Activated naive CD4-positive, alpha-beta T cell treated with anti-CD3 and anti-CD28 coated beads, Interleukin-2, amount 10 ng/mL, durations not matched to agents 7 days and 5 days (primary cell): ENCODE measurements at regions of chr1 and their contacts with region 1.

Region 1: GRCh38 chr1:221741711-221742554 is at the start of gene DUSP10:
- DNase-seq: peak; percentile 100
- H3K4me3 Mint-ChIP-seq: peak within 1 kb of the TSS; percentile 70
- H3K27ac Mint-ChIP-seq: no peak within 1 kb of the TSS
- H3K4me1 Mint-ChIP-seq: peaks cover 17% of the 10 kb centered on the region
- H3K27me3 Mint-ChIP-seq: no peaks in the 10 kb centered on the region

Region 2: DNA sequence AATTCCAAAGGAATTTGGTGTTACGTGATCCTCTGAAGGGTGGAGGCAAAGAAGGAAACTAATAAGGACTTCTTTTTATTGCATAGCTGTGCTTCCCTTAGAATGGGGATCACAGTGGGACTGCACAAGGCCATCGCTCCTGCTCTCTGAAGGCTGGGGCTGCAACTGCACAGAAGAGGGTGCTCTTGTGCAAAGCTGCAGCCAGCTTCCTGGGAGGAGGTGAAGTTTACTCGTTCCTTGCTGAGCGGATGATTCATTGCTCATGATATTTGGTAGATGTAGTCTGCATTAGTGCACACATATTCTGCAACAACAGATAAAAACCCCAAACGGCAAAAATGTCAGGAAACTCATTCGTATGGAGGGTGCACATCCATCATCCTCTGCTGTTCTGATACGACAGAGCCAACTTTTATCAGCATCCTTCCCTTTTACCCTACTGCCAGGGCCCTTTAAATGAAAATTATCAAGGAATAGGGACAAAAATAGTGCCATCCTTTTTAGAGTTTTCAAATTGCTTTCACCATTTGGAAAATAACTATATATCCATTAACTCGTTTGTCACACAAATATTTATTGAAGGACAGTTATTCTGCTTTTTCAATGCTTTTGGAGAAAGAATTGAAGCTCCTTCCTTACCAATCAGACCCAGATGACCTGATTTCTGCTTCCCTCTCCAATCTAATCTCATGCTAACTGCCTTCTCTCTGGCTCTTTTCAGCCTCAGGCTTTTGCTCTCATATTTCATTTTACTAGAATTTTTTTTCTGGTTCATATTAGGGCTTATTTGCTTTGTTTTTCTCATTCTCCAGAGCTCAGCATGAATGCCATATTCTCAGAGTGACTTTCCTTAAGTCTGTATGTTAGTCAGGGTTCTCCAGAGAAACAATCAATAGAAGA is 263.6 kb before region 1 on chr1:
- CTCF ChIA-PET with region 1: interaction called, 21 read pairs
- DNase-seq: peak; percentile 64
- H3K4me3 Mint-ChIP-seq: no peak overlapping the region
- H3K27ac Mint-ChIP-seq: no peak overlapping the region
- H3K4me1 Mint-ChIP-seq: no peaks in the 10 kb centered on the region
- H3K27me3 Mint-ChIP-seq: peaks cover 8% of the 10 kb centered on the region

Region 3: DNA sequence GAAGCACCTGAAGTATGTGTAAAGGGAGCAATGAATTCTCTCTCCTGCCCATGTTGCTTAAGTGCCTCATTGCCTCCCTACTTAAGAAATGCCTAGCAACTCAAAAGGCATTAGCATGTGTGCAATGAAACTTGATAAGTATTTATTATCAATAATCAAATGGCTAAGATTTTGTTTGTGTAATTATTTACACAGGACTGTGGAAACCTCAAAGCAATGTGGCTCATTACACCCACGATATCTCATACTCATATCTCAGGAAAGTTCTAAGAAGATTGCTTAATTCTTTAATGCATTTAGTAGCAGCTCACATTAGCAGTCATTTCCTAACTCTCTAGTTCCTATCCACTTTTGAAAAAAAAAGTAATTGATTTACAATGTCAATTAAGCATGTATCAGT is 253.4 kb before region 1 on chr1:
- CTCF ChIA-PET with region 1: no interaction called
- DNase-seq: no peak
- H3K4me3 Mint-ChIP-seq: no peak overlapping the region
- H3K27ac Mint-ChIP-seq: no peak overlapping the region
- H3K4me1 Mint-ChIP-seq: no peaks in the 10 kb centered on the region
- H3K27me3 Mint-ChIP-seq: no peaks in the 10 kb centered on the region

Region 4: DNA sequence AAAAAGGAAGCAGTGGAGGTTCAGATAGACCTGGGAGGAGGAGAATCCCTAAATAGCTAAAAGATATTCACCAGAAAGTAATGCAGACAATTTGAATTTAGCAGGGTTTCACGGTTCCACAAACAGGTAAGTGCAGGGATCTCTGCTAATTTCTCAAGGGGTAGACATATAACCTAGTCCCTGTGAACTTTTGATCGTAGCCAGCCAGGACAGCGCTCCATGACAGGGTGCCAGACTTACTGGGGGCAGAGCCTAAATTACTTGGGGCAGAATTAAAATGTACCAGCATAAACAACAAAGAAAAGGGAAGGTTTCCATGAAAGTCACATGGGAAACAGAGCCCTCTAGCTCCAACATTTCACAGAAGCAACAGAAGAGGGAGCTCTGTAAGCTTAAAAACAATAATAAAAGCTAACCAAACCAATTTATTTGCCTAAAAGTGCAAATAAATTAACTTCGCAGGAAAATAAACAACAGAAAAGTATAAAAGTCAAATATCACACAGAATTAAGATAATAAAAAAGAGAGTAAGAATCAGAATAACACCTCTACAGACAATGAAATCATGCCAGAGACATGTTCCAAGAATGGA is 198.3 kb before region 1 on chr1:
- CTCF ChIA-PET with region 1: interaction called, 16 read pairs
- DNase-seq: no peak
- H3K4me3 Mint-ChIP-seq: no peak overlapping the region
- H3K27ac Mint-ChIP-seq: no peak overlapping the region
- H3K4me1 Mint-ChIP-seq: no peaks in the 10 kb centered on the region
- H3K27me3 Mint-ChIP-seq: peaks cover 3% of the 10 kb centered on the region

Region 5: GRCh38 chr1:221708987-221709386 is 32.9 kb before region 1 on chr1:
- CTCF ChIA-PET with region 1: interaction called, 76 read pairs
- DNase-seq: peak; percentile 37
- H3K4me3 Mint-ChIP-seq: no peak overlapping the region
- H3K27ac Mint-ChIP-seq: no peak overlapping the region
- H3K4me1 Mint-ChIP-seq: peaks cover 75% of the 10 kb centered on the region
- H3K27me3 Mint-ChIP-seq: no peaks in the 10 kb centered on the region

Region 6: DNA sequence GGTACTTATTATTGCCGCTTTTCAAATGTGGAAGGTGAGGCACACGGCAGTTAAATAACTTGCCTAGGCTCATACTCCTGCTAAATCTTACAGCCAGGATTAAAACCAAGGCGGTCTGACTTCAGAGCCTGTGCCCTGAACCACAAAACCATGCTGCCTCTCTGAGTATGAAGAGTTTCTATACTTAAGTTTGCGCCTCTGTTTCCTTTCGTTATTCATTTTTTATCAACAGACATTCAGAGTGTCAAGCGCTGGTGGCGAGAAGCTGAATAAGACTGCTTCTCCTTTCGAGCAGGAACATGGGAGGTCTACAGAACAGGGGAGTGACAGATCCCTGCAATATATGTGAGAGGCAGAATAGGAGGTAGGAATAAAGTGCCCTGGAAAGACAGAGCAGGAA is 96.0 kb after region 1 on chr1:
- CTCF ChIA-PET with region 1: interaction called, 12 read pairs
- DNase-seq: peak; percentile 69
- H3K4me3 Mint-ChIP-seq: peak overlapping the region; percentile 4
- H3K27ac Mint-ChIP-seq: peak overlapping the region; percentile 73
- H3K4me1 Mint-ChIP-seq: peaks cover 73% of the 10 kb centered on the region
- H3K27me3 Mint-ChIP-seq: peaks cover 7% of the 10 kb centered on the region

Region 7: DNA sequence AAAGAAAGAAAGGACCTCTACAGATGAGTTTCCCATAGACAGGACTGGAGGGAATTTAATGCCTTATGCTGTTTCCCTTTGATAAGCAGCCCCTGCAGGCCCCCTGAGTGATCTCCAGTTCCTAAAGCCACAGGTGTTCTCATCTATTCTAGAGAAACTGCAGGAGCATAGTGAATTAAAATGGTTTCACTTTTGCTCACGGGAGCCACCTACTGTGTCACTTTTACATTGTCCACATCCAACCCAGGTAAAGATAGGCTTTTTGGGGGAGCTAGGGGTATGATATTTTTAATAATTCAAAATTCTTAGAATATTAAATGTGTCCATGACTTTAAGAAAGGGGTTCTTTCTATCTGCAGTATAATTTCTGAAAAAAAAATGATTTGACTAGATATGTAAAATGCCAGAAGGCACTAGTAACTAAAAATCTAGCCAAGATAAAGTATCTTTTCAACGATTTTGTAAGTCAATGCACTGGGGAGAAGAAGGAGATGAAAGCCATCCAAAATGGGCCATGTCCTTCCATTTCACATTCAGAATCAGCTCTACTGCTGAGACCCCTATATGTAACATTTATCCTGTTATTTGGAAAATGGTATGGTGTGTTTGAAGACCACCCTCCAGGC is 267.3 kb after region 1 on chr1:
- CTCF ChIA-PET with region 1: interaction called, 23 read pairs
- DNase-seq: peak; percentile 48
- H3K4me3 Mint-ChIP-seq: no peak overlapping the region
- H3K27ac Mint-ChIP-seq: no peak overlapping the region
- H3K4me1 Mint-ChIP-seq: peaks cover 4% of the 10 kb centered on the region
- H3K27me3 Mint-ChIP-seq: peaks cover 8% of the 10 kb centered on the region

Region 8: GRCh38 chr1:222424826-222425225 is 682.9 kb after region 1 on chr1:
- CTCF ChIA-PET with region 1: no interaction called
- DNase-seq: no peak
- H3K4me3 Mint-ChIP-seq: no peak overlapping the region
- H3K27ac Mint-ChIP-seq: no peak overlapping the region
- H3K4me1 Mint-ChIP-seq: peaks cover 36% of the 10 kb centered on the region
- H3K27me3 Mint-ChIP-seq: no peaks in the 10 kb centered on the region

Region 9: GRCh38 chr1:222455188-222455879 is 713.4 kb after region 1 on chr1:
- CTCF ChIA-PET with region 1: interaction called, 11 read pairs
- DNase-seq: peak; percentile 90
- H3K4me3 Mint-ChIP-seq: no peak overlapping the region
- H3K27ac Mint-ChIP-seq: peak overlapping the region; percentile 22
- H3K4me1 Mint-ChIP-seq: peaks cover 18% of the 10 kb centered on the region
- H3K27me3 Mint-ChIP-seq: peaks cover 7% of the 10 kb centered on the region